ENCODE measurements at regions of chr12 and their contacts with region 1.

Region 1: DNA sequence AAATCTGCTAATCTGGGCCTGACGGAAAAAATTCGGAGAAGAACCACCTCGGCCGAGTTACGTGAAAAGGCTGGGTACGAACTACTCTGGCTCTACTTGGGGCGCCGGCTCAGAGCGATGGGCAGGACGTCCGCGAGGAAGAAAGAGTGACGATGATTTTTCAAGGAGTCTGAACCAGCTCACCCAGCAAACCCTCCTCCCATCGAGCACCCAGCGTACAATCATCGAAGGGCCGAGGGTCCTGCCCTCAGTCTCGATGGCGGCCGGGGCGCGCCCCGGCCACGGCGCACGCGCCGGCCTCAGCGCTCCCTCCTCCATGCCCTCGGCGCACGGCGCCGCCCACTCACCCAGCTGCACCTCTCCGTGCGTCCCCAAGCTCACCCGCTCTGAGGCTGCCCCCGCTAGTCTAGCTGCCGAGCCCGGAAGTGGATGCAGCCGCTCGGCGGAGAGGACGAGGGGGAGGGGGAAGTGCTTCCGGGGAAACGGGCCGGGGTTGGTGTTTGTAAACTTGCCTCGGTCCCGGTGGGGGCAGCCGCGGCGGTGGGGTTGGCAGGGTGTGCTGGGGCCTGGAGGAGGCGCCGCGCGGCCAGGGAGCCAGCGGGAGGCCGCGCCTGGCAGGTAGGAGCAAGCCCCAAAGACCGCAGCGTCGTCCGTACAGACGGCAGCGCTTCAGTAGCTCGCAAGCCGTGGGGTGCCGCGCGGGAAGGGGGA is at the starts of genes CSAD and ZNF740:
- DNase-seq: peak; percentile 86 to 98 (median 97)
- ATAC-seq: peak; percentile 98
- H3K4me3 ChIP-seq: peak within 1 kb of the TSS; percentile 89
- H3K4me3 Mint-ChIP-seq: peak within 1 kb of the TSS; percentile 84 to 98 (median 92)
- H3K27ac ChIP-seq: peak within 1 kb of the TSS; percentile 92
- H3K27ac Mint-ChIP-seq: peak within 1 kb of the TSS; percentile 93 to 98 (median 97)
- H3K4me1 ChIP-seq: peaks cover 30 to 46% of the 10 kb centered on the region in 2 donors
- H3K4me1 Mint-ChIP-seq: peaks cover 44 to 57% (median 52%) of the 10 kb centered on the region in 7 donors
- H3K27me3 ChIP-seq: no peaks in the 10 kb centered on the region
- H3K27me3 Mint-ChIP-seq: no peaks in the 10 kb centered on the region
- total RNA-seq, gene CSAD: 34.1 to 76.3 (median 69.1) TPM
- total RNA-seq, gene ZNF740: 37.2 to 135 (median 49.5) TPM

Region 2: GRCh38 chr12:53031617-53032016 is 148.8 kb before region 1 on chr12:
- CTCF ChIA-PET with region 1: no interaction called
- POLR2A ChIA-PET with region 1: no interaction called
- intact Hi-C with region 1: no loop called
- DNase-seq: no peak
- ATAC-seq: no peak
- H3K4me3 ChIP-seq: no peak overlapping the region
- H3K4me3 Mint-ChIP-seq: no peak overlapping the region
- H3K27ac ChIP-seq: no peak overlapping the region
- H3K27ac Mint-ChIP-seq: no peak overlapping the region
- H3K4me1 ChIP-seq: no peaks in the 10 kb centered on the region
- H3K4me1 Mint-ChIP-seq: peaks cover 0 to 13% (median 4%) of the 10 kb centered on the region in 7 donors
- H3K27me3 ChIP-seq: no peaks in the 10 kb centered on the region
- H3K27me3 Mint-ChIP-seq: no peaks in the 10 kb centered on the region

Region 3: DNA sequence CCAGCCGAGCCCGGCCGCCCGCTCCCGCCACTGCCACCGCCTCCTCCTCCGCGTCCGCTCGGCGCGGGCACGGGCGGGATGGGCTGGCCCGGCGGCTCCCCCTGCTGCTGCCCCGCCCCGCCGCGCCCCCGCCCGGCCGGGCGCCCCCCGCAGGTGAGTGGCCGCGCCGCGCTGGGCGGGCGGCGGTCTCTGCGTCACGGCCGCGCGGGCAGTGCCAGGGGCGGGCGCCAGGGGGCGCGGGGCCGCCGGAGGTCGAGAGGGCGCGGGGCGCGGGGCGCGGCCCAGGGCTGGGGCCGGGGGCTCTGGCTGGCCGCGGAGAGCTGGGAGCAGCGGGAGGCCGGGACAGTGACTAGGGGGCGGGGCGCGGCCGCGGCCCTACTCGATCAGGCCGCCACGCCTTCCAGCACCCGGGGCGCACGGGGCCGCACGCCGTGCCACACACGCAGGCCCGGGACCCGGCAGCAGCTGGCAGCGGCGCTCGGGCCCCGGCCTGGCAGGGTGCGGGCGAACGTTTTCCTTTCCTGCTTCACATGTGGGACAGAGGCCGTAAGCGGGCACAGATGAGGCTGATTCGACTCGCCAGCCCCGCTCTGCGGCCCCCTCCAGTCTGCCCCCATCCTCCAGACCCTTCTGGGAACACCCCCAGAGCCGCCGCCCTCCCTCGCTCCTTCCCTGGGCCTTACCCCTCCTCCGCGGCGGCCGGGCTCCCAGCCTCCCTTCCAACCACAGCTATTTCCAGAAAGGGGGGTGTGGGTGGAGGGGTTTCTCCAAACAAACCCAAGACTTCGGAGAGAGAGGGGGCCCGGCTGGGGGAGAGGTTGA is 132.9 kb before region 1 on chr12:
- CTCF ChIA-PET with region 1: no interaction called
- POLR2A ChIA-PET with region 1: no interaction called
- intact Hi-C with region 1: loop called in 1 of 2 experiments (anchors 2 kb)
- DNase-seq: peak; percentile 53 to 86 (median 70)
- ATAC-seq: peak; percentile 91
- H3K4me3 ChIP-seq: peak overlapping the region; percentile 82
- H3K4me3 Mint-ChIP-seq: peak overlapping the region in 9 of 10 donors; percentile 43 to 95 (median 76)
- H3K27ac ChIP-seq: peak overlapping the region; percentile 78
- H3K27ac Mint-ChIP-seq: peak overlapping the region in 6 of 9 donors; percentile 12 to 92 (median 82)
- H3K4me1 ChIP-seq: peaks cover 7 to 9% of the 10 kb centered on the region in 2 donors
- H3K4me1 Mint-ChIP-seq: peaks cover 0 to 24% (median 13%) of the 10 kb centered on the region in 7 donors
- H3K27me3 ChIP-seq: no peaks in the 10 kb centered on the region
- H3K27me3 Mint-ChIP-seq: peaks cover 0 to 13% (median 0%) of the 10 kb centered on the region in 5 donors

Region 4: DNA sequence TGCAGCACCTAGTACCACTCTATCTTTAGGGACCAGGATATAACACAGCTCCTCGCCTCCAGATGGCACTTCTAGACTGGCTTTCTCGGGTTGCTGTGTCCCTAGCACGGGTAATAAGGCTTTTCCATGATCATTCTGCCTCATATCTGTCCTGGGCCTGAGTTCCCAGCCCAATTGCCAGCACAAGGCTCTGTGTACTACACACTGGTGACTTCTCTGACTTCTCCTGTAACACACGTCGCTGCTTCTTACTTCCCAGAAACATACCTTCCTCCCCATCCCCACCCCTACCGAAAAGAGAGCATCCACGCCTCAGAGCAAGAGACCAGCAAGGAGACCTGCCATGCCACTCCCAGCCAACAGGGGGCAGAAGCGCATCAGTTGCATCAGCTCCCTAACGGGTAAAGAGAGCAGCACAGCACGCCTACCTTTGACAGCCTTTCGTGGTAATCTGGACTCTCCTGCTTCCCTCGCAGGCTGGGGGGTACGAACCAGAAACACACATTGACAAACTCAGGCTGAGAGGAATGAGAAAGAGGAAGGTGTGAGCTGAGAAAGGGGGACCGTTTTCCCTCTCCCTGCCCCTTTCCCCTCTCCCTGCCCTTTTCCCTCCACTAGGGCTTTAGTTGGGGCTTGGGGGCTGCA is 21.1 kb before region 1 on chr12:
- CTCF ChIA-PET with region 1: interaction called, 7 read pairs
- POLR2A ChIA-PET with region 1: interaction called, 6 read pairs
- intact Hi-C with region 1: loop called (anchors 1 kb)
- DNase-seq: peak; percentile 72 to 91 (median 85)
- ATAC-seq: peak; percentile 100
- H3K4me3 ChIP-seq: no peak overlapping the region
- H3K4me3 Mint-ChIP-seq: peak overlapping the region in 1 of 10 donors; percentile 24
- H3K27ac ChIP-seq: no peak overlapping the region
- H3K27ac Mint-ChIP-seq: peak overlapping the region in 6 of 9 donors; percentile 26 to 66 (median 52)
- H3K4me1 ChIP-seq: peaks cover 5 to 7% of the 10 kb centered on the region in 2 donors
- H3K4me1 Mint-ChIP-seq: peaks cover 4 to 12% (median 7%) of the 10 kb centered on the region in 7 donors
- H3K27me3 ChIP-seq: no peaks in the 10 kb centered on the region
- H3K27me3 Mint-ChIP-seq: no peaks in the 10 kb centered on the region

Region 5: DNA sequence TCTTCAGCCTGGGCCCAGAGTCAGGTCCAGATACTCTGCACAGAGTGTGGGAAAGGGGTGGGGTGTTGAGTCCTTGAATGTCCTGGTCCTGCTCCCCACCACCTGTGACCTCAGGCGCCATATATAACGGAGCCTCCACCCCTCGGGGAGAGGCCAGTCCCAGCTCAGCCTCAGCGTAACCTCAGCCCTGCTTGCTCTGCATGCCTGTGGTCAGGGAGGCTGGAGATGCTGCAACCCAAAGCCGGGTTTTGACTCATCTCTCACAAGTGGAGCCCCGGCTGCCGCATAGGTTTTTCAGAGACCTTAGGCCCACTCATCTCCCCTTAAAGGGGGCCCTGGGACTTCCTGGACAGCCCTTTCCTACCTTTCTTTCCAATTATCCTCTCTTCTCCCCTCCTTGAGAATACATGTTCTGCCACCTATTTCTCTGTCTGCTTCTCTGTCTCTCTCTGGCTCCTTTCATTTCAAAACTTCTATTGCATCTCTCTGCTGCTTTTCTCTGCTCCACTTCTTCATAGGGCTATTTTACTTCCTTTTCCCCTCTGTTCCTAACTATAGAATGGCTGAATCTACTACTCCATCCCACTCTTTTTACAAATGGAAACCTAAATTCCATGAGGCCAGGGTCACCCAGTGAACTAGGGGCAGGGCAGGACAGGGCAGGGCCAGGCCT is 25.5 kb after region 1 on chr12:
- CTCF ChIA-PET with region 1: interaction called, 11 read pairs
- POLR2A ChIA-PET with region 1: interaction called, 217 read pairs
- intact Hi-C with region 1: loop called (anchors 1 kb)
- DNase-seq: peak in 1 of 9 donors; percentile 75
- ATAC-seq: peak; percentile 68
- H3K4me3 ChIP-seq: peak overlapping the region; percentile 84
- H3K4me3 Mint-ChIP-seq: peak overlapping the region; percentile 83 to 92 (median 86)
- H3K27ac ChIP-seq: peak overlapping the region; percentile 85
- H3K27ac Mint-ChIP-seq: peak overlapping the region; percentile 61 to 90 (median 87)
- H3K4me1 ChIP-seq: peaks cover 63 to 73% of the 10 kb centered on the region in 2 donors
- H3K4me1 Mint-ChIP-seq: peaks cover 53 to 84% (median 71%) of the 10 kb centered on the region in 7 donors
- H3K27me3 ChIP-seq: no peaks in the 10 kb centered on the region
- H3K27me3 Mint-ChIP-seq: no peaks in the 10 kb centered on the region

Region 6: GRCh38 chr12:53251477-53252348 is 71.3 kb after region 1 on chr12:
- CTCF ChIA-PET with region 1: interaction called, 4 read pairs
- POLR2A ChIA-PET with region 1: interaction called, 7 read pairs
- intact Hi-C with region 1: loop called (anchors 1 kb)
- DNase-seq: peak; percentile 58 to 81 (median 69)
- ATAC-seq: peak; percentile 90
- H3K4me3 ChIP-seq: peak overlapping the region; percentile 95
- H3K4me3 Mint-ChIP-seq: peak overlapping the region; percentile 89 to 98 (median 96)
- H3K27ac ChIP-seq: peak overlapping the region; percentile 95
- H3K27ac Mint-ChIP-seq: peak overlapping the region; percentile 84 to 97 (median 94)
- H3K4me1 ChIP-seq: peaks cover 26 to 38% of the 10 kb centered on the region in 2 donors
- H3K4me1 Mint-ChIP-seq: peaks cover 37 to 59% (median 48%) of the 10 kb centered on the region in 7 donors
- H3K27me3 ChIP-seq: no peaks in the 10 kb centered on the region
- H3K27me3 Mint-ChIP-seq: no peaks in the 10 kb centered on the region

Region 7: DNA sequence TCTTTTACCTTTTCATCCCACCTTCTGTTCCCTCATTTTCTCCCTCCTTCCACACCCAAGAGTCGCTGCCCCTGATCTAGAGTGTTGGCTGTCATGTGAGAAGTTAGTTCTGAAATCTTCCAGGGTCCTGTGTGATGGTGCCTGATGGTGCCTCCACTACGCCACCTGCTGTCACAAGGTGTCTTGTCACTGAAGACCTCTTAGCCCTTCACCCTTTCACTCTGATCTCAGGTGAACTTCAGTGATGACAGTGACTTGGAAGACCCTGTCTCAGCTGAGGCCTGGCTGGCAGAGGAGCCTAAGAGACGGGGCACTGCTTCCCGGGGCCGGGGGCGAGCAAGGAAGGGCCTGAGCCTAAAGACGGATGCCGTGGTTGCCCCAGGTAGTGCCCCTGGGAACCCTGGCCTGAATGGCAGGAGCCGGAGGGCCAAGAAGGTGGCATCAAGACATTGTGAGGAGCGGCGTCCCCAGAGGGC is 107.4 kb after region 1 on chr12:
- CTCF ChIA-PET with region 1: no interaction called
- POLR2A ChIA-PET with region 1: no interaction called
- intact Hi-C with region 1: loop called in 1 of 2 experiments (anchors 1 kb)
- DNase-seq: peak; percentile 43 to 76 (median 69)
- ATAC-seq: peak; percentile 94
- H3K4me3 ChIP-seq: no peak overlapping the region
- H3K4me3 Mint-ChIP-seq: no peak overlapping the region
- H3K27ac ChIP-seq: no peak overlapping the region
- H3K27ac Mint-ChIP-seq: peak overlapping the region in 4 of 9 donors; percentile 8 to 86 (median 25)
- H3K4me1 ChIP-seq: no peaks in the 10 kb centered on the region
- H3K4me1 Mint-ChIP-seq: peaks cover 4 to 11% (median 5%) of the 10 kb centered on the region in 7 donors
- H3K27me3 ChIP-seq: no peaks in the 10 kb centered on the region
- H3K27me3 Mint-ChIP-seq: no peaks in the 10 kb centered on the region